ENCODE measurements at regions of chr11 and their contacts with region 1.

Region 1: GRCh38 chr11:55942785-55943392 is 6.7 kb upstream of the OR5I1 start:
- DNase-seq: peak; percentile 77
- ATAC-seq: no peak; the same call in 1 of the 2 replicates
- H3K4me3 ChIP-seq: no peak overlapping the region
- H3K27ac ChIP-seq: no peak overlapping the region
- H3K4me1 ChIP-seq: no peaks in the 10 kb centered on the region
- H3K27me3 ChIP-seq: peaks cover 22% of the 10 kb centered on the region; the same call in 1 of the 2 replicates
- CTCF ChIP-seq: peak; percentile 77

Region 2: DNA sequence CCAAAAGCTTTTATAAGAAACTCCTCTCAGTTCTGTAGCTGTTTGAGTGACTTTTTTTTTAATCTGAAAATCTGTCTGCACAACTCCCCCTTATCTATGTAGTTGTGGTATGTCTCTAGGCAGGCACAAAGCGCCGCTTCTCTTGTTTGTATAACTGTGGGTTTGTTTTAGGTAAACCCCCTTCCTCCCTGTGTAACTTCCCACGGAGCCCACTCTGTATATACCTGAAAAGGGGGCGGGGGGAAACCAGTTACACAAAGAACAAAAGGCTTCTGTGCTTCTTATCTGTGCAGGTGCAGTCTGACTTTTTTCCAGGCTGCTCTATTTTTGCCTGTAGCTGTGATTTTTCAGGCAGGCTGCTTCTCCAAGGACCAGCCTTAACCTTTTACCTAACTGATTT is 13.6 kb after region 1 on chr11:
- CTCF ChIA-PET with region 1: no interaction called
- POLR2A ChIA-PET with region 1: no interaction called
- intact Hi-C with region 1: no loop called
- DNase-seq: no peak
- ATAC-seq: no peak
- H3K4me3 ChIP-seq: no peak overlapping the region
- H3K27ac ChIP-seq: no peak overlapping the region
- H3K4me1 ChIP-seq: no peaks in the 10 kb centered on the region
- H3K27me3 ChIP-seq: no peaks in the 10 kb centered on the region
- CTCF ChIP-seq: no peak

Region 3: DNA sequence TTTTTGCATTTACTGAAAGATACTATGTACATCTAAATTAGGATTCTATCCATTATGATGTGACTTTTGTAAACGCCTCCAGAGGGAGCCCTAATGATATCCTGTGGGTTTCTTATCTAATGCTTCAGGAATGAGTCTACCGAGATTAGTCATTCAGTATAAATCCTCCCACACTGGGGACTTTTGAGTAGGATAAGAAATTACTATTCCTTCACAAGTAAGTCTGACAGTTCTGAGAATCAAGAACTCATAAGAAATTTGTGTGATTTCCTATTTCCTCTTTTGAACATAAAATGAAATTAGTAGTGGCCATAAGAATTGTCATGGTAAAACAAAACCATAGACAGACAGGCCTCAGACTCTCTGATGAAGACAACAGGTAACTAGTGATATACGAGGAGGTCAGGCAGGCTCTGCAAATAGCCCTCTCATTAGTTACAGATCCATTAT is 681.8 kb after region 1 on chr11:
- CTCF ChIA-PET with region 1: no interaction called
- POLR2A ChIA-PET with region 1: no interaction called
- intact Hi-C with region 1: loop called (anchors 5 kb)
- DNase-seq: peak; percentile 86
- ATAC-seq: peak; percentile 76
- H3K4me3 ChIP-seq: no peak overlapping the region
- H3K27ac ChIP-seq: no peak overlapping the region
- H3K4me1 ChIP-seq: peaks cover 5% of the 10 kb centered on the region; the same call in 1 of the 2 replicates
- H3K27me3 ChIP-seq: no peaks in the 10 kb centered on the region
- CTCF ChIP-seq: peak; percentile 81

Measured in PC-3 (cell line).